ENCODE measurements at regions of chr3 and their contacts with region 1.

Region 1: GRCh38 chr3:44861412-44862220 is at the start of gene TMEM42:
- DNase-seq: peak; percentile 86 to 94 (median 89)
- H3K4me3 ChIP-seq: peak within 1 kb of the TSS; percentile 21 to 98 (median 52)
- H3K27ac ChIP-seq: peak within 1 kb of the TSS in 4 of 5 donors; percentile 76 to 98 (median 84)
- H3K4me1 ChIP-seq: peaks cover 0 to 11% of the 10 kb centered on the region in 2 donors
- H3K27me3 ChIP-seq: no peaks in the 10 kb centered on the region
- CTCF ChIP-seq: peak in 2 of 6 experiments; percentile 7 to 26
- POLR2A ChIP-seq: peak; percentile 70 to 74
- total RNA-seq, gene TMEM42: 7.5 to 41.7 (median 27.9) TPM

Region 2: DNA sequence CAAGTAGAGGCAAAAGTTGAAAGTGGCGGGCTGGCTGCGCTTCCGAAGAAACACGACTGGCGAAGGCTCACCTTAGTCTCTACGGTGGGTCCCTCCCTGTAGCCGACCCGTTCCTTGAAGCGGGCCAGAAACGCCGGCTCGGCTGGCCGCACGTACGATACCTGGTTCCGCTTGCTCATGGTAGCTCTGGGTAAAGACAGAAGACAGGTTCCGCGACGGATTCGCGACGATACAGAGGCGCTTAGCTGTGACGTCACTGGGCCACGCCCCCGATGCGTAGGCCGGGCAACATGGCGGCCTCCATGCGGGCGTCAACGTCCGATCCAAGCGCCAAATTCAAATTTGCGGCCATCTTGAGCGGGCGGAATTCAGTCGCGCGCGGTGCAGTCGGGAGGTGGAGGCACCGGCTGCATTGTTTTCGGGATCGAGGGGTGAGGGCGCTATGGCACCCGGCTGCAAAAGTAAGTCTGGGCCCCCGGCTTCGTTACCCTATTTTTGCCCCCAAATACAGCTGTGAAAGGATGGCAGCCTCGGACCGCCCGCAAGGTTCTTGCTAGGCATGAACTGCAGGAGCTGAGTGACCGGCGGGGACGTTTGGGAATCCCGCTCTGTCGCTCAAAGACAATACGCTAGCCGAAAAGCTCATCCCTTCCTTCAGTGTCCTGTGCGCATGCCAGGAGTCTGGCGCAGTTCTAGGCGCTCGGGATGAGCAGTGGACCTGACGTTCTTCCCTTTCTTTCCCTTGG is 100.0 kb before region 1 on chr3 and contains the starts of genes KIAA1143 and KIF15:
- intact Hi-C with region 1: loop called in 1 of 2 experiments (anchors 10 kb)
- DNase-seq: peak; percentile 96 to 99 (median 97)
- H3K4me3 ChIP-seq: peak within 1 kb of the TSS; percentile 83 to 93 (median 89)
- H3K27ac ChIP-seq: peak within 1 kb of the TSS in 2 of 5 donors; percentile 68 to 80
- H3K4me1 ChIP-seq: peaks cover 6 to 10% of the 10 kb centered on the region in 2 donors
- H3K27me3 ChIP-seq: no peaks in the 10 kb centered on the region
- CTCF ChIP-seq: peak in 1 of 6 experiments; percentile 2
- POLR2A ChIP-seq: peak; percentile 49 to 73
- total RNA-seq, gene KIAA1143: 15.7 to 43.6 (median 26.3) TPM
- total RNA-seq, gene KIF15: 0.42 to 10.2 (median 0.69) TPM

Region 3: DNA sequence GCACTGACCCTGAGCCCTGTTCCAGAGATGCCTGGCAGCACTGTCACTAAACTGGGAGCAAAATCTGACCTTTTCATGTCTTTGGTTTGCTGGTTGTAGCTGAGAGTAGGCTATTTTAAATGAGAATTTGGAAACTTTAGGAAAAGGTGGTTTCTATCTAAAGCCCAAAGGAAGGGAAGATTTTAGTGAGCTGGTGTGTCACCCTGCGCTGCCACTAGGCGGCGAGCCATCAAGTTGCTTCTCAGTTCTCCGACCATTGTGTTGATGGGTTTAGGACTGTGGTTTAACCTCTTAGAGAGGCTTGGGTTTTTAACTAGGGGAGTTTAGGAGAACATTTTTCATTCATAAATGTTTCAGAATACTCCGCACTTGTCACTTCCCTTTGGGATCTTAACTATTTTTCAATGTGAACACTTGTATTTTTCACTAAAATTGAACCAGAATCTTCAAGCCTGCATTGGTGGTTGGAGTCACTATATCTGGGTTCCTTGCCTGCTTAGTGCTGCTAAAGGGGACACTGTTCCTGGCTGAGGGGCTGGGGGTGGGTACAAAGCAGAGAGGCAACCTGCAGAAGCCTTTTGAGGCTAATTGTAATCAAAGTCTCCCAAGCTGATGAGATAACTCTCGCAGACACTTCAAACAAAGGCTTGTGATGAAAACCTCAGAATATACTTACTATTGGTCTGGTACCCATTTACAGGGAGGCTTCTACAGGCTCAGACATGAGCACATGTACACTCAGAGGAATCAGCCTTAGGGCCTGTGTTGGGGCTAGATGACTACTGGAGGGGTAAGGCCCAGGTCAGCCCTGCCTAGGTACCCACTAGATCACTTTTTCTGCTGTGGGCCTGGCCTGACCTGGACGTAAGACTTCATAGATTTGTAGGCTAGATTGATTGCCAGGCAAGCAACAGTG is 131.2 kb after region 1 on chr3:
- intact Hi-C with region 1: loop called in 1 of 2 experiments (anchors 5 kb)
- DNase-seq: peak in 1 of 7 donors; percentile 58
- H3K4me3 ChIP-seq: no peak overlapping the region
- H3K27ac ChIP-seq: peak overlapping the region; percentile 40 to 91 (median 75)
- H3K4me1 ChIP-seq: peaks cover 57 to 81% of the 10 kb centered on the region in 2 donors
- H3K27me3 ChIP-seq: no peaks in the 10 kb centered on the region
- CTCF ChIP-seq: peak; percentile 21 to 54 (median 43)
- POLR2A ChIP-seq: no peak